PC-9 (cell line): ENCODE measurements at regions of chr5 and their contacts with region 1.

Region 1: DNA sequence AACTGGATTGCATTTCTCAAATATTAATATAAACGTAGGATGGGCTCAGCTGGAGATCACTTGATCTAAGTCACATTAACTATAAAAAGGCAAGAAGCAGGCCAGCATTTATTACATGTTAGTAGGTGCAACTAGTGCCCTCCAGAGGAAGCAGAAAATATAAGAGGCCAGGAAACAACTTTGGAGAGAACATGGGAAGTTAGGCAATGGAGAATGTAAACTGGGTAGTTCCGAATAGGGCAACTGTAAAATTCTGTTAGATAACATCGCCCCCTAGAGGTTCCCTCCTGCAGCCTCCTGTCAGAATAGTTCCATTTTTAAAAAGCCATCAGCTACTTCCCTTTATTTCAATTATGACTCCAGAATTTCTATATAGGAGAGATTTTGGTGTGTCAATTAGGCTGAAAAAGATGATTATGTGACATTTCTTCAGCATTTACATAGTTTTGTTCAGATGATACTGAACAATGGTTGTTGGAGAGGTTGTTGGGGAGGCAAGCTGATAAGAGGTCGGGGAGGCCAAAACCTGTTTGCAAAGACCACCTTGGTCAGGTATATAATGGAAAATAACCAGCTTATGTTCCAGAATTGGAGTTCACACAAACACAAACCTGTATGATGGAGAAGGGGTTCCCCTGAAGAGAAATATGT is 22.4 kb downstream of the CCL28 start:
- DNase-seq: peak; percentile 73 to 91
- H3K4me3 ChIP-seq: no peak overlapping the region
- H3K27ac ChIP-seq: no peak overlapping the region
- H3K4me1 ChIP-seq: 0 out of 2 replicates have a peak, but pooled peaks cover 5% of the 10 kb centered on the region
- H3K27me3 ChIP-seq: no peaks in the 10 kb centered on the region
- CTCF ChIP-seq: peak; percentile 99

Region 2: DNA sequence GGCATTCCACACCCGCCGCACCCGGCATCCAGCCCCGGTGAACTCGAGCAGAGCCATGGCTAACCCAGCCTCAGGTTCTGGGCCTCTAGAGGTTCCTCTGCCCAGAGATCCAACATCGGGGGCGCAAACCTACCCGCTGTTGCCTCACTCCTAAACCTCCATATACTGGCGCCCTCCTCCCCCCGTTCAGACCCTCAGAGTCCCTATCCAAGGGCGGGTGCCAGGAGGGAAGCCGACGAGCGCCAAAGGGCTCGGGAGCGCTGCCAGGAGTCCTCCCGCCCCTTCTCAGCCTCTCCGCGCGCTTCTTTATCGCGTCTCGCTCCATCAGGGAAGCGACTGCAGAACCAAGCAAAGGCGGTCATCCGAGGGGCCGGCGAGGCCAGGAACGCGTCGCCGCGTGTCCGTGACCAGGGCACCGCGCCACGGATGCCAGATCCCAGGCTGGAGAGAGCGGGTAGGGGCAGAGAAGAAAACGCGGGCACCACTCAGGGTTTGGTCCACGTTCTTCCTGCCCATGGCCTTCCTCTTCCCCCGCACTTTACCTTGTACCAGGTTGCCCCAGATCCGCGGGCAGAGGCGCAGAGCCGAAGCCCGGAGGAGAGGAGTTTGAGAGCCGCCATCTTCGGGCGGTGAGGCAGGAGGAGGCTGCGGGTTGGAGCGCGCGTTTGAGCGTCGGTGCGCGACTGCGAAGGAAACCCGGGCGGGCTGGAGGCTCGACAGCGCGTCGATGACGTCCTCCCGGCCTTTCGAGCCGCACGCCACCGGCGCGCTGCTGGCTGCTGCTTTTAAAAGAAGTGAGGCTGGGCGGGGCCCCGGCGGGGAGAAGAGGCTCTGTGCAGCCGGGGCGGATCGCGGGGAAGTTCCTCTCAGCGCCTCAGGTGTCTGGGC is 1519.8 kb before region 1 on chr5 and contains the start of gene OXCT1:
- CTCF ChIA-PET with region 1: no interaction called
- POLR2A ChIA-PET with region 1: no interaction called
- intact Hi-C with region 1: loop called (anchors 10 kb)
- DNase-seq: peak; percentile 66 to 78
- H3K4me3 ChIP-seq: peak within 1 kb of the TSS; percentile 67
- H3K27ac ChIP-seq: no peak within 1 kb of the TSS
- H3K4me1 ChIP-seq: 0 out of 2 replicates have a peak, but pooled peaks cover 4% of the 10 kb centered on the region
- H3K27me3 ChIP-seq: peaks cover 24% of the 10 kb centered on the region
- CTCF ChIP-seq: no peak
- total RNA-seq, gene OXCT1: 22.5 and 29.7 TPM in 2 replicates

Region 3: GRCh38 chr5:43040287-43041098 is 349.3 kb before region 1 on chr5 and contains the start of gene ANXA2R:
- CTCF ChIA-PET with region 1: no interaction called
- POLR2A ChIA-PET with region 1: no interaction called
- intact Hi-C with region 1: loop called (anchors 2 kb)
- DNase-seq: peak; percentile 94 to 97
- H3K4me3 ChIP-seq: peak within 1 kb of the TSS; percentile 76
- H3K27ac ChIP-seq: peak within 1 kb of the TSS; percentile 60
- H3K4me1 ChIP-seq: peaks cover 1% of the 10 kb centered on the region; the same call in 1 of the 2 replicates
- H3K27me3 ChIP-seq: no peaks in the 10 kb centered on the region
- CTCF ChIP-seq: peak; percentile 99
- total RNA-seq, gene ANXA2R: 3.6 and 6.3 TPM in 2 replicates

Region 4: DNA sequence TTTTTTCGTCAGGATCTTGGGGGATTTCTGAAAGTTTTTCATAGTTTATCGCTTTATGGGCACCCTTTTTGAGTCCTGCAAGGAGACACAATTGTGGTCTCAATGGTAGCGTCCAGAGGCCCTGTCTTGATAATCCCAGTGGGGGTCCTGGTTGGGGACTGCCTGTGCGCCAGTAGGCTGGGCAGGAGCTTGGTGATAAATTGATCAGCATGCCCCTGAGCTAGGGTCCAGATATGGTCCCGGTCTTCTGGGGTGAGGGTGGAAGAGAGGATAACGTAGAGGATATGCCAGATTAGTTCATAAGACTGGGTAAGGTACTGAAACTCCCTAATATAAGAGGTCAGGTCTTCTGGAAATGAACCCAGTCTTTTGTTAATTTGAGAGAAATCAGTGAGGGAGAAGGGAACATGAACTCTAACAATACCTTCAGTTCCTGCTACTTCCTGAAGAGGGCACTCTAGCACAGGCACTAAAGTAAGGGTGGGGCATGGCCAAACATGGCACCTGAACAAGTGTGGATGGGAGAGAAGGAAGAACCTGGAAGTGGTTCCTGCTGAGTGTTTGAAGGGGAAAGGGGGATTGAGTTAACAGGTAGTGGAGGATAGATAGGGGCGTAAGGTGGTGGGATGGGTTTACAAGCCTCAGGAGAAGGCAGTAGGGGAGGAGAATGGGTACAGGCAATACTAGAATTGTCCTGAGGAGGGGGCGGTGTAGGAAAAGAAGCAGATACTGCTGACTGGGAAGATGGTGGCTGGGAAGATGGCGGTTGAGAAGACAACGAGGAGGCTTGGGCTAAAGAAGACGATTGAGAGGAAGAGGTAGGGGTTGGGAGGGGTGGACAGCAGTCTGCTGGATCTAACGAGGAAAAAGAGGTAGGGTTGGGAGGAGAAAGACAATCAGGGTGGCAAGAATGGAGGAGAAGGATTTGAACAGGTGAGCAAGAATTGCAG is 315.9 kb before region 1 on chr5:
- CTCF ChIA-PET with region 1: no interaction called
- POLR2A ChIA-PET with region 1: no interaction called
- intact Hi-C with region 1: loop called (anchors 2 kb)
- DNase-seq: peak in 1 of 2 experiments; percentile 55
- H3K4me3 ChIP-seq: no peak overlapping the region
- H3K27ac ChIP-seq: no peak overlapping the region
- H3K4me1 ChIP-seq: peaks cover 5% of the 10 kb centered on the region
- H3K27me3 ChIP-seq: no peaks in the 10 kb centered on the region
- CTCF ChIP-seq: peak; percentile 97

Region 5: DNA sequence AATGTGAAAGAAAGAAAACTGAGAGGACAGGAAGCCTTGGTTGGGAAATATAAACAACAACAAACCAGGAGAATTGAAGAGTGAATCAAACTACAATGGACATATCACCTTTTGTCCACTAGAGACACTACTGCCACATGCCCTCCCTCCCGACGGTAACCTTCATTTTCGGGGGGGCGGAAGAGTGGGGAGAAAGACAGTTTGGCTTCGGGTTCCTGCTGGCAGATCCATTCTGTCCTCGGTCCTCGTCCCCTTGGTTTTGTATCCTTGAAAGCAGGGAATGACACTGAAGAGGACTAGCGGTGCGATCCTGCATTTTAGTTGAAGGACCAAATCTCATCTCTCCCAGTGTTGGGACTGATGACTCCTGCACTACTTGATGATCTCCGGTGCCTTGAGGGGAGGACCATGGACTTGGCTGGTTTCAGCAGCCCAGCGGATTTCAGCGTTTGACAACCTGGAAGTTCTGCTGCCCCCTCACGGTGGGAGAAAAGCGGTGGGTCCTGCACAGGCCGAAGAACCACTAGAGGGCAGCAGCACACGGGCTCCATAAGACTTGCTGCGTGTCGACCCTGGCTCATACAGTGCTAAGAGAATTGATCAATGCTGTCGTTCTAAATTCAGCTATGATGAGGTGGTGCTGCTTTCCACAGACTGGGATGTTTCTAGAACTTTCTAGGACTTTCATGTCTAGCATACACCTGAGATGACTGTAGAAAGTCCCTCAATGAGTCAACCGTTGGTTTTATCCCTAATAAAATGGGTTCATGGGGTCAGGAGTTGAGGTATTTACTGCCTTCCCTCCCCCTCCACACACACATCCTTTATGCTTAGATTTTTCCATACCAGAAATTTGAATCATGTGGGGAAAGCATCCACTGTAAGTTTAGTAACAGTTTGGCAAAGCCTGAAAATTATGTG is 284.2 kb before region 1 on chr5:
- CTCF ChIA-PET with region 1: no interaction called
- POLR2A ChIA-PET with region 1: no interaction called
- intact Hi-C with region 1: loop called (anchors 1 kb)
- DNase-seq: peak; percentile 90 to 96
- H3K4me3 ChIP-seq: peak overlapping the region; percentile 51
- H3K27ac ChIP-seq: no peak overlapping the region
- H3K4me1 ChIP-seq: peaks cover 8% of the 10 kb centered on the region; the same call in 1 of the 2 replicates
- H3K27me3 ChIP-seq: no peaks in the 10 kb centered on the region
- CTCF ChIP-seq: peak; percentile 100

Region 6: DNA sequence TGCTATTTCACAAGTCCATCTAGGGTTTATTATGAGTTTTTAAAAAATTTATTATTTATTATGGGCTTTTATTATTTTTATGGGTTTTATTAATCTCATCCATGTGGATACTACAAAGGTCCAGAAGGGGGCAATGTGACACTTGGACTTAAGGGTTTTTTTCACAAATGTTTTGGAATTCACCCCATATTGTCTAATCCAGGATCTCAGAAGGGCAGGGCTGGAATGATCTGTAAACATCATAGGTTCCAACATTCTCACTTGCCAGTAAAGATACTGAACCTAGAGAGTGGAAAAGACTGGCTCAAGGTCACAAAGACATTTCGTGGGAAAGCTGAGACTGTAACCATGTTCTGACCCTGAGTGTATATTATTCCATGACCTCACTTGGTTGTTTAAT is 162.1 kb before region 1 on chr5:
- CTCF ChIA-PET with region 1: interaction called, 6 read pairs
- POLR2A ChIA-PET with region 1: no interaction called
- intact Hi-C with region 1: loop called (anchors 1 kb)
- DNase-seq: peak; percentile 19 to 72
- H3K4me3 ChIP-seq: no peak overlapping the region
- H3K27ac ChIP-seq: no peak overlapping the region
- H3K4me1 ChIP-seq: no peaks in the 10 kb centered on the region
- H3K27me3 ChIP-seq: no peaks in the 10 kb centered on the region
- CTCF ChIP-seq: peak; percentile 93

Region 7: GRCh38 chr5:43367909-43368648 is 21.7 kb before region 1 on chr5:
- CTCF ChIA-PET with region 1: no interaction called
- POLR2A ChIA-PET with region 1: no interaction called
- intact Hi-C with region 1: no loop called
- DNase-seq: no peak
- H3K4me3 ChIP-seq: no peak overlapping the region
- H3K27ac ChIP-seq: no peak overlapping the region
- H3K4me1 ChIP-seq: no peaks in the 10 kb centered on the region
- H3K27me3 ChIP-seq: no peaks in the 10 kb centered on the region
- CTCF ChIP-seq: no peak

Region 8: GRCh38 chr5:43602461-43603343 is 212.9 kb after region 1 on chr5 and contains the start of gene NNT:
- CTCF ChIA-PET with region 1: no interaction called
- POLR2A ChIA-PET with region 1: no interaction called
- intact Hi-C with region 1: loop called (anchors 10 kb)
- DNase-seq: peak; percentile 60 to 88
- H3K4me3 ChIP-seq: peak within 1 kb of the TSS; percentile 81
- H3K27ac ChIP-seq: no peak within 1 kb of the TSS
- H3K4me1 ChIP-seq: peaks cover 21% of the 10 kb centered on the region
- H3K27me3 ChIP-seq: no peaks in the 10 kb centered on the region
- CTCF ChIP-seq: 0 out of 2 replicates have a peak, but pooled peaks have one; percentile 6
- total RNA-seq, gene NNT: 92.6 and 112 TPM in 2 replicates